ENCODE measurements at regions of chr3 and their contacts with region 1.

Region 1: GRCh38 chr3:4712143-4712542 is 219.0 kb downstream of the ITPR1 start:
- DNase-seq: no peak
- ATAC-seq: no peak
- H3K4me3 Mint-ChIP-seq: no peak overlapping the region
- H3K27ac Mint-ChIP-seq: no peak overlapping the region
- H3K4me1 Mint-ChIP-seq: peaks cover 31% of the 10 kb centered on the region
- H3K27me3 Mint-ChIP-seq: no peaks in the 10 kb centered on the region

Region 2: GRCh38 chr3:4776980-4777581 is 64.9 kb after region 1 on chr3:
- CTCF ChIA-PET with region 1: interaction called, 16 read pairs
- POLR2A ChIA-PET with region 1: interaction called, 3 read pairs
- DNase-seq: no peak
- ATAC-seq: peak; percentile 39
- H3K4me3 Mint-ChIP-seq: no peak overlapping the region
- H3K27ac Mint-ChIP-seq: peak overlapping the region; percentile 27
- H3K4me1 Mint-ChIP-seq: peaks cover 56% of the 10 kb centered on the region
- H3K27me3 Mint-ChIP-seq: no peaks in the 10 kb centered on the region

Region 3: DNA sequence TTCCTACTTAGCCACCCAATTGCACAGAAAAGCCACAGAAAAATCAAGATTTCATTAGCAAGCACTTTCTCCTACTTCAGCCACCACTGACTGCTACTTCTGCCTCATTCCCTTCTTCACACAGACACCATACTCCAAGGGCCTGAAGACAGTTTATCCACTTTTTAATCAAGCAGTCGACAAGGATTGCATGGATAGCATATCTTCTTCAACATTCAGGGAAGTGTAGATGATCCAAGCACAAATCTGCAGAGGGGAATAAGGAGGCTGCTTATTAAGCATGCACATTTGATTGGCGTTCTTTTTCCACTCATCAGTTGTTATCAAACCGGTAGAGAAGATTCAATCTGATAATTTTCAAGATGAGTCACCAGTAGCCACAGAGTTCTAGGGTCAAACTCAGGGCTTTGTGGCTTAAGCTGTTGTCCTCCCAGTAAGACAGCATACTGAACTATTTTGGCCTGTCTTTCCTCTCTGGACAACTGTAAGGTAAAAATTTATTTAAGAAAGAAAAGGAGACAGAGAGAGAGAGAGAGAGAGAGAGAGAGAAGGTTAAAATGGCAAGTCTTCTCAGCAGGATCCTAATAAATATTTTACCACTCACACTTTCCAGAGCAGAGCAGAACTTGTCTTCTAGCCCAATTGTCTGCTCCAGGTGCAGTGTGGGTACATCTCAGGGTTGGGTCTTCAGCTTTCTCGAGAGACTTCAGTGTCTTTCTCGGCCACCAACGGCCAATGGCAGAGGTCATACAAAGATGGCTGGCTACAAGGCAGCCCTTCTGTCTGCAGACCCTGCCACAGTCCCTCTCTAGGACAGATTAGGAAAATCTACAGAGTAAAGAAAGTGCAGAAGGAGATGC is 186.5 kb after region 1 on chr3:
- CTCF ChIA-PET with region 1: interaction called, 12 read pairs
- POLR2A ChIA-PET with region 1: no interaction called
- DNase-seq: no peak
- ATAC-seq: peak; percentile 75
- H3K4me3 Mint-ChIP-seq: no peak overlapping the region
- H3K27ac Mint-ChIP-seq: peak overlapping the region; percentile 19
- H3K4me1 Mint-ChIP-seq: peaks cover 59% of the 10 kb centered on the region
- H3K27me3 Mint-ChIP-seq: no peaks in the 10 kb centered on the region

Region 4: DNA sequence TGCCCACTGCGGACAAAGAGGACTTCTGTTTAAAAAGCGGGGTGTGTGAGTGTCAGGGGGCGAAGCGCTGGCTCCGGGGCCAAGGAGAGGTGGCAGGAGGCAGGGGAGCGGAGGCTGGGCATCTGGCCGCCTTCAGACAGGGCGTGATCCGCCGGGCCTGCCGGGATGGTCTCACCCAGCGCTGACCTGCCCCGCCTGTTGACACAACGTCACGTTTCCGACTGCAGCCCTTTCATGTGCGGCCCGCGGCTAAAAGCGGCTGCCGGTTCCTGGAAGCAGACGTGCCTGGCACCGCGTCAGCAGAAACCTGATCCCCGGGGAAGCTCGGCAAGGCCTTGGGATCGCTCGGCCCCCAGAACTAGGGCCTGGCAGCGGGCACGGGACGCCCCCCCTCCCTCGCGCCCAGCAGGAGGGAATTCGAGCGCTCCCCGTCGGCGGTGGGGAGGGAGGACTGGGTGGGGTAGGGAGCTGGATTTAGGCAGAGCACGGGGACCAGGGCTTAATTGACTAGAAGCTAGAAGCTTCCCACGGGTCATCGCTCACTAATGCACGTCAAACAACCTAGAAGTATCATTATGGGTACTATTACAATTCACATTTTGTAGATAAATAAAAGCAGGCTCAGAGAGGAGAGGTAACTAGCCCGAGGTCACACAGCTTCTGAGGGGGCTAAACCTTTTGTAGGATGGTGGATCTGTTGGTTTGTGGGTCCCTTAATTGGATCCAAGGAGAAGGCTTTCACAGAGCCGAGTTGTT is 274.8 kb after region 1 on chr3:
- CTCF ChIA-PET with region 1: interaction called, 258 read pairs
- POLR2A ChIA-PET with region 1: interaction called, 16 read pairs
- DNase-seq: peak; percentile 89
- ATAC-seq: peak; percentile 77
- H3K4me3 Mint-ChIP-seq: peak overlapping the region; percentile 91
- H3K27ac Mint-ChIP-seq: peak overlapping the region; percentile 92
- H3K4me1 Mint-ChIP-seq: peaks cover 64% of the 10 kb centered on the region
- H3K27me3 Mint-ChIP-seq: no peaks in the 10 kb centered on the region

Region 5: GRCh38 chr3:5035692-5036391 is 323.7 kb after region 1 on chr3:
- CTCF ChIA-PET with region 1: interaction called, 13 read pairs
- POLR2A ChIA-PET with region 1: no interaction called
- DNase-seq: no peak
- ATAC-seq: no peak
- H3K4me3 Mint-ChIP-seq: no peak overlapping the region
- H3K27ac Mint-ChIP-seq: no peak overlapping the region
- H3K4me1 Mint-ChIP-seq: peaks cover 57% of the 10 kb centered on the region
- H3K27me3 Mint-ChIP-seq: no peaks in the 10 kb centered on the region

Region 6: GRCh38 chr3:5194341-5195159 is 482.4 kb after region 1 on chr3:
- CTCF ChIA-PET with region 1: interaction called, 10 read pairs
- POLR2A ChIA-PET with region 1: no interaction called
- DNase-seq: peak; percentile 70
- ATAC-seq: peak; percentile 70
- H3K4me3 Mint-ChIP-seq: peak overlapping the region; percentile 2
- H3K27ac Mint-ChIP-seq: peak overlapping the region; percentile 71
- H3K4me1 Mint-ChIP-seq: peaks cover 86% of the 10 kb centered on the region
- H3K27me3 Mint-ChIP-seq: no peaks in the 10 kb centered on the region